Naive thymus-derived CD4-positive, alpha-beta T cell (primary cell): ENCODE measurements at regions of chr12 and their contacts with region 1.

Region 1: GRCh38 chr12:7460375-7461259 is 16.7 kb upstream of the CD163L1 start:
- DNase-seq: peak in 8 of 9 donors; percentile 20 to 49 (median 42)
- ATAC-seq: peak; percentile 82
- H3K4me3 ChIP-seq: no peak overlapping the region
- H3K4me3 Mint-ChIP-seq: no peak overlapping the region
- H3K27ac ChIP-seq: no peak overlapping the region
- H3K27ac Mint-ChIP-seq: no peak overlapping the region
- H3K4me1 ChIP-seq: no peaks in the 10 kb centered on the region
- H3K4me1 Mint-ChIP-seq: no peaks in the 10 kb centered on the region
- H3K27me3 ChIP-seq: no peaks in the 10 kb centered on the region
- H3K27me3 Mint-ChIP-seq: peaks cover under 1 to 18% (median 10%) of the 10 kb centered on the region in 5 donors

Region 2: GRCh38 chr12:7142056-7142644 is 318.5 kb before region 1 on chr12:
- CTCF ChIA-PET with region 1: no interaction called
- POLR2A ChIA-PET with region 1: no interaction called
- intact Hi-C with region 1: loop called in 1 of 2 experiments (anchors 2 kb)
- DNase-seq: peak in 8 of 9 donors; percentile 33 to 60 (median 56)
- ATAC-seq: peak; percentile 83
- H3K4me3 ChIP-seq: no peak overlapping the region
- H3K4me3 Mint-ChIP-seq: no peak overlapping the region
- H3K27ac ChIP-seq: no peak overlapping the region
- H3K27ac Mint-ChIP-seq: no peak overlapping the region
- H3K4me1 ChIP-seq: peaks cover 0 to 3% of the 10 kb centered on the region in 2 donors
- H3K4me1 Mint-ChIP-seq: peaks cover 0 to 19% (median 5%) of the 10 kb centered on the region in 7 donors
- H3K27me3 ChIP-seq: no peaks in the 10 kb centered on the region
- H3K27me3 Mint-ChIP-seq: no peaks in the 10 kb centered on the region

Region 3: GRCh38 chr12:7219599-7220243 is 240.9 kb before region 1 on chr12:
- CTCF ChIA-PET with region 1: interaction called, 10 read pairs
- POLR2A ChIA-PET with region 1: no interaction called
- intact Hi-C with region 1: loop called (anchors 1 kb)
- DNase-seq: peak; percentile 32 to 75 (median 66)
- ATAC-seq: peak; percentile 79
- H3K4me3 ChIP-seq: no peak overlapping the region
- H3K4me3 Mint-ChIP-seq: no peak overlapping the region
- H3K27ac ChIP-seq: no peak overlapping the region
- H3K27ac Mint-ChIP-seq: no peak overlapping the region
- H3K4me1 ChIP-seq: no peaks in the 10 kb centered on the region
- H3K4me1 Mint-ChIP-seq: peaks cover 0 to 1% (median 0%) of the 10 kb centered on the region in 7 donors
- H3K27me3 ChIP-seq: no peaks in the 10 kb centered on the region
- H3K27me3 Mint-ChIP-seq: peaks cover 0 to 9% (median 0%) of the 10 kb centered on the region in 5 donors

Region 4: GRCh38 chr12:7319930-7320329 is 140.7 kb before region 1 on chr12:
- CTCF ChIA-PET with region 1: no interaction called
- POLR2A ChIA-PET with region 1: no interaction called
- intact Hi-C with region 1: loop called in 1 of 2 experiments (anchors 1 kb)
- DNase-seq: no peak
- ATAC-seq: no peak
- H3K4me3 ChIP-seq: no peak overlapping the region
- H3K4me3 Mint-ChIP-seq: no peak overlapping the region
- H3K27ac ChIP-seq: no peak overlapping the region
- H3K27ac Mint-ChIP-seq: no peak overlapping the region
- H3K4me1 ChIP-seq: no peaks in the 10 kb centered on the region
- H3K4me1 Mint-ChIP-seq: no peaks in the 10 kb centered on the region
- H3K27me3 ChIP-seq: no peaks in the 10 kb centered on the region
- H3K27me3 Mint-ChIP-seq: peaks cover 0 to 9% (median 2%) of the 10 kb centered on the region in 5 donors